WTC11 (cell line): ENCODE measurements at regions of chr11 and their contacts with region 1.

Region 1: GRCh38 chr11:61429691-61430582 is at the starts of genes CPSF7 and SDHAF2:
- DNase-seq: peak; percentile 97
- ATAC-seq: peak; percentile 86
- H3K4me3 Mint-ChIP-seq: peak within 1 kb of the TSS; percentile 100
- H3K27ac Mint-ChIP-seq: peak within 1 kb of the TSS; percentile 100
- H3K4me1 Mint-ChIP-seq: peaks cover 20% of the 10 kb centered on the region
- H3K27me3 Mint-ChIP-seq: no peaks in the 10 kb centered on the region
- CTCF ChIP-seq: no peak
- total RNA-seq, gene CPSF7: 86.0 to 90.7 TPM (median 88.3 TPM) in 3 replicates
- total RNA-seq, gene SDHAF2: 36.2 to 36.8 TPM (median 36.5 TPM) in 3 replicates

Region 2: GRCh38 chr11:61361686-61362541 is 68.0 kb before region 1 on chr11 and contains the starts of genes CYB561A3 and TMEM138:
- CTCF ChIA-PET with region 1: interaction called, 5 read pairs
- POLR2A ChIA-PET with region 1: interaction called, 15 read pairs
- DNase-seq: peak; percentile 92
- ATAC-seq: peak; percentile 93
- H3K4me3 Mint-ChIP-seq: peak within 1 kb of the TSS; percentile 96
- H3K27ac Mint-ChIP-seq: peak within 1 kb of the TSS; percentile 98
- H3K4me1 Mint-ChIP-seq: peaks cover 22% of the 10 kb centered on the region
- H3K27me3 Mint-ChIP-seq: no peaks in the 10 kb centered on the region
- CTCF ChIP-seq: no peak
- total RNA-seq, gene CYB561A3: 34.3 to 38.8 TPM (median 35.0 TPM) in 3 replicates
- total RNA-seq, gene TMEM138: 34.0 to 39.0 TPM (median 38.8 TPM) in 3 replicates

Region 3: DNA sequence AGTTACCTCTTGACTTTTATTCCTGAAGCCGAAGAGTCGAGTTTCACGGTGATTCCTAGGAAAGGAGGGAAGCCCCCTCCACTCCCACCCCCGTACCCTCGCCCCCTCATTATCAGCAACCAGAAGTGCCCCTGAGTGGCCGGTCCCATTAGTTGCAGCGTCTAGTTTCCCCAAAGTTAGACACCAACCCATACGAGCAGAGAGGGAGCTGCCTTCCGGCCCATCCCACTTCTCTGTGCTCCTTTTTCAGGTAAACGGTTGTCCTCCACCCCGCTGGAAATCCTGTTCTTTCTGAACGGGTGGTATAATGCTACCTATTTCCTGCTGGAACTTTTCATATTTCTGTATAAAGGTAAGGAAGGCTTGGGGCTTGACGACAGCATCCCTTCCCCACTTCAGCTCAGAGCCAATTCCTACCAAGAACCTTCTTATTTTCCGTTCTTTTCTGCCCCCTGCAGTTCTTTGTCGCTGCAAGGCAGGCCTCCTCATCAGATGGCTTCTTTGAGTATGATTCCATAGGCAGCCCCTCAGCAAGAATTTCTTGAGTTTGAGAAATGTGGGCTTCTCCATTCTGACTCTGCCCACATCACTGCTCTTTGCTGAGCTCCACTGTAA is 36.8 kb before region 1 on chr11:
- CTCF ChIA-PET with region 1: interaction called, 11 read pairs
- POLR2A ChIA-PET with region 1: interaction called, 4 read pairs
- DNase-seq: no peak
- ATAC-seq: peak; percentile 14
- H3K4me3 Mint-ChIP-seq: peak overlapping the region; percentile 96
- H3K27ac Mint-ChIP-seq: peak overlapping the region; percentile 80
- H3K4me1 Mint-ChIP-seq: peaks cover 22% of the 10 kb centered on the region
- H3K27me3 Mint-ChIP-seq: no peaks in the 10 kb centered on the region
- CTCF ChIP-seq: no peak

Region 4: DNA sequence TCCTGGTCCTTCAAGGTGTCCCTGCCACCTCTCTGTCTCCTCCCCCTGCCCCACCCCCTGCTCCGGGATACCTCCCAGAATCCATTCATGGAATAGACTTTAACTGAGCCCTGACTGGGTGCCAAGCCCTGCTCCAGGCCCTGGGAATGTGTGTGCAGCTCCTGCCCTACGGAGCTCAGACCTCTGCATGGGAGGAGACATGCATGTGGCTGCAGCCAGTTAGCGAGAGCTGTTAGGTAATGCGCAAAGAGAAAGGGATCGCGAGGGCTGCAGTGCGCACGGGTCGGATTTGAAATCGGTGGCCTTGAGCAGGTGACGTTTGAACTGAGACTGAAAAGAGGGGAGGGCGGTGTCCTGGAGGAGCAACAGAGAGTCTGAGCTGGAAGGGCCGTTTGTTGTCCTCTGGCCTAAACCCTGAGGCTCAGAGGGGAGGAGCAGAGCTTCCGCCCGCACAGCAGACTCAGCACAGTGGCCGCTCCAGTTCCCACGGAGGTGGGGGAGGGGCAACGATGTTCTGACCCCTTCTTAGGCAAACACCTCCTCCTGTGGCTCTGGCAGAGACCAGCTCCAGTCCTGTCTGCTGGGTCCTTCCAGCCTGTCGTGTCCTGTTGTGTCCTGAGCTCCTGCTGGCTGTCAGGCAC is 58.8 kb after region 1 on chr11:
- CTCF ChIA-PET with region 1: interaction called, 18 read pairs
- POLR2A ChIA-PET with region 1: no interaction called
- DNase-seq: peak; percentile 76
- ATAC-seq: peak; percentile 60
- H3K4me3 Mint-ChIP-seq: peak overlapping the region; percentile 50
- H3K27ac Mint-ChIP-seq: peak overlapping the region; percentile 95
- H3K4me1 Mint-ChIP-seq: peaks cover 42% of the 10 kb centered on the region
- H3K27me3 Mint-ChIP-seq: peaks cover 7% of the 10 kb centered on the region; the same call in 1 of the 2 replicates
- CTCF ChIP-seq: no peak

Region 5: DNA sequence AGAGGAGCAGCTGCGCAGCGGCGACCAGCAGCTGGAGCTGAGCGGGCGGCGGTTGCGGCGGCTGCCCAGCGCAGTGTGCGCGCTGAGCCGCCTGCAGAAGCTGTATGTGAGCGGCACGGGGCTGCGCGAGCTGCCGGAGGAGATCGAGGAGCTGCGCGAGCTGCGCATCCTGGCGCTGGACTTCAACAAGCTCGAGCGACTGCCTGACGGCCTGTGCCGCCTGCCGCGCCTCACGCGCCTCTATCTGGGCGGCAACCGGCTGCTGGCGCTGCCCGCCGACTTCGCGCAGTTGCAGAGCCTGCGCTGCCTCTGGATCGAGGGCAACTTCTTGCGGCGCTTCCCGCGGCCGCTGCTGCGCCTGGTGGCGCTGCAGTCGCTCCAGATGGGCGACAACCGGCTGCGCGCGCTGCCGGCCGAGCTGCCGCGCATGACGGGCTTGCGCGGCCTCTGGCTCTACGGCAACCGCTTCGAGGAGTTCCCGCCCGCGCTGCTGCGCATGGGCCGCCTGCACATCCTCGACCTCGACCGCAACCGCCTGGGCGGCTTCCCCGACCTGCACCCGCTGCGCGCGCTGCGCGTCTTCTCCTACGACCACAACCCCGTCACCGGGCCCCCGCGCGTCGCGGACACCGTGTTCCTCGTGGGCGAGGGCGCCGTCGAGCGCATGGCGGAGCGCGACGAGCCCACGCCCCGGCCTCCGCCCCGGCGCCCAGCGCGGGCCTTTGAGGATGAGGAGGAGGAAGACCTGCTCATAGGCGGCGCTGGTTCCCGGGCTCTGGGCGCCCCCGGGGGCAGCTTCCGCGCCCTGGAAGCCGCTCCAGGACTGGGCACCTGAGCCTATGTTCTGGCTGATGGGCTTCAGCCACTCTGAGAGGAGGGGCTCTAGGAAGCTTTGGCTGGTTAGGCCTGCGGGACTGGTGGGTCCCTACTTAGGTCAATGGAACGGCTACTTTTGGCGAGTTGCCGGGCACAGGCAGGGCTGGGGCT is 79.4 kb after region 1 on chr11:
- CTCF ChIA-PET with region 1: interaction called, 11 read pairs
- POLR2A ChIA-PET with region 1: no interaction called
- DNase-seq: peak; percentile 80
- ATAC-seq: peak; percentile 63
- H3K4me3 Mint-ChIP-seq: peak overlapping the region; percentile 48
- H3K27ac Mint-ChIP-seq: no peak overlapping the region
- H3K4me1 Mint-ChIP-seq: peaks cover 58% of the 10 kb centered on the region
- H3K27me3 Mint-ChIP-seq: peaks cover 59% of the 10 kb centered on the region
- CTCF ChIP-seq: no peak